Mammary epithelial cell (primary cell): ENCODE measurements at regions of chr20 and their contacts with region 1.

Region 1: DNA sequence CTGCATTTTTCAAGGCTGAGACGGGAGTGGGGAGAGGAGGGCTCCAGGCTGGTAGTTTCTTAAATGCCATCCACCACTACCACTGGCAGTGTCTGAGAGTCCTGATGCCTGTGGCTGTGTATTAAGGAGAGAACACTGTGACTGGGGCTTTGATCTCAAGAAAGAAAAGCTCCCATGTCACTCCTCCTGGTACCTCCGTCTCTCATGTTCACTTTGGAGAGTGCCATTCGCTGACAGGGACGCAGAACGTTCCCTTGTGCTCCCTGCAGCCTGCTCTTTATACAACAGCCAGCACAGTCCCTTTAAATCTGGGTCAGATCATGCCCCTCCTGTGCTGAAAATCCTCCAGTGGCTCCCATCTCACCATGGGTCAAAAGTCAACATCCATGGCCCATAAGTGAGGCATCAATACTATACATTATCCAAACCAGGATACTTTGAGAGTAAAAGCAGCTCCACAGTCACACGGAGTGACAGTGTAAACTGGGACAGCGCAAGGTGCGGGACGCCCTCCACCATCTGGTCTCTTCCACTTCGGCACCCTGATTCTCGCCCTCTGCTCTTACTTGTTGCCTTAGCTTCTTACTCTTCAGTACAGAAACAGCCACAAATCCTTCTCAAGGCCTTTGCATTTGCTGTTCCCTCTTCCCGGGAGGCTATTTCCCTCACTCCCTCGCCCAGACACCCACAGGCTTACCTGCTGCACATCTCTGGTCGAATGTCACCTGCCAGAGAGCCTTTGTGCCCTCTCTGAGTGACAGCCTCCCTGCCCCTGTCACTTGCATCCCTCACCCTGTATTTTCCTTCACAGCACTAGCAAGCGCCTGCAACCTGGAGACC is 20.0 kb downstream of the PDYN start:
- DNase-seq: no peak
- H3K4me3 ChIP-seq: no peak overlapping the region
- H3K27ac ChIP-seq: no peak overlapping the region
- H3K4me1 ChIP-seq: no peaks in the 10 kb centered on the region
- H3K27me3 ChIP-seq: no peaks in the 10 kb centered on the region
- CTCF ChIP-seq: no peak

Region 2: DNA sequence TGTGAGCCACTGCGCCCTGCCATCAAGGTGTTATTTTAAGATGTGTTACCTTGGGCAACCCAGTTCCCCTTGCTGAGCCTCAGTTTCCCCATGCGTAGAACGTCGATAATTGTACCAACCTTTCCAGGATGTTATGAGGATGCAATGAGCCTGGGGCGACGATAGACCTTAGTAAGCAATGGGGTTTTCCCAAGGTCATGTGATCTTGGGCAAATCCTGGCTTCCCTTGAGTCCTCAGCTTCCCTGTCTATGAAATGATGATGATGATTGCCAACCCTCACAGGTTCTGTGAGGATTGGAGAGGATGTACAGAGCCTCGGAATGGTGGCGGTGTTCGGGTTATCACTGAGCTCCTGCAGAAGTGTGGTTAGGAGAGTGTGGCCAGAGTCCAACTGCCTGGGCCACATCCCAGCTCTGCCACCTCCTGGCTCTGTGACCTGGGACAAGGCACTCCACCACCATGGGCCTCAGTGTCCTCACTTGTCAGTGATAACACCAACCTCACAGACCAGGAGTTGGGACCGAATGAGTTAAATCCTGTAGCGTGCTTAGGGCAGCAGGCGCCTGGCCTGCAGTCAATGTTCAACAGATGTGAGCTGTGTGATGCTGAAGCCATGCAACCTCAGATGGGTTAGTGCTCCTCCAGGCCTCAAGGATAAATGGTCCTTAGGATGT is 55.2 kb before region 1 on chr20:
- CTCF ChIA-PET with region 1: no interaction called
- dilution Hi-C with region 1: loop called (anchors 5 kb)
- in situ Hi-C with region 1: no loop called
- intact Hi-C with region 1: no loop called
- DNase-seq: no peak
- H3K4me3 ChIP-seq: no peak overlapping the region
- H3K27ac ChIP-seq: no peak overlapping the region
- H3K4me1 ChIP-seq: no peaks in the 10 kb centered on the region
- H3K27me3 ChIP-seq: no peaks in the 10 kb centered on the region
- CTCF ChIP-seq: no peak